GM12878 (cell line): ENCODE measurements at regions of chr16 and their contacts with region 1.

Region 1: DNA sequence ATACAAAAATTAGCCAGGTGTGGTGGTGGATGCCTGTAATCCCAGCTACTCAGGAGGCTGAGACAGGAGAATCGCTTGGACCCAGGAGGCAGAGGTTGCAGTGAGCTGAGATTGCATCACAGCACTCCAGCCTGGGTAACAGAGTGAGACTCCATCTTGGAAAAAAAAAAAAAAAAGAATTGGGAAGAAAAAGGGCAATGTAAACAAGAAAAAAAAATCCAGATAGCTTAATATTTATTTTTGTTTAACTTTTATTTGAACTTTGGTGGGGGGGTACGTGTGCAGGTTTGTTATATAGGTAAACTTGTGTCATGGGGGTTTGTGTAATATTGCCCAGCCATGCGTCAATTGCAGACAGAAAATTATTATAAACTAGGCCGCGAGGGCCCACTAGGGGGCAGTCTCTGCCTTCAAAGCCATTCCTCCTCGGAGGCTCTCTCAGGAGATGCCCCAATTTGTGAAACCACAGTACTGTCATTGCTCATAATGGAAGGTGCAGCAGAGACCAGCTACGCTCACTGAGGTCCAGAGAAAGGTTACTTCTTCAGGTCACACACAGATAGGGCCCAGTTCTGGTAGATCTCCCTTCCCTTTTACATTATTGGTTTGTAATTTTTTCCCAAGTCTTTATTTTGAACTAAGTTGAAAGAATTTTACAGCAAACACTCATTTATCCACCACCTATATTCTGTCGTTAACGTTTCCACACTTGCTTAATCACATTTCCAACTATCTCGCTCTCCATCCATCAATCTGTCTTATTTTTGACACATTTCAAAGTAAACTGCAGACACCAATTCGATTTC is 206.2 kb downstream of the PRKCB start:
- DNase-seq: peak; percentile 45
- ATAC-seq: peak; percentile 98
- H3K4me3 ChIP-seq: no peak overlapping the region
- H3K27ac ChIP-seq: no peak overlapping the region
- H3K4me1 ChIP-seq: no peaks in the 10 kb centered on the region
- H3K27me3 ChIP-seq: no peaks in the 10 kb centered on the region
- CTCF ChIP-seq: peak; percentile 64 to 80 (median 72)
- EP300 ChIP-seq: no peak
- POLR2A ChIP-seq: no peak
- RAD21 ChIP-seq: peak; percentile 77

Region 2: DNA sequence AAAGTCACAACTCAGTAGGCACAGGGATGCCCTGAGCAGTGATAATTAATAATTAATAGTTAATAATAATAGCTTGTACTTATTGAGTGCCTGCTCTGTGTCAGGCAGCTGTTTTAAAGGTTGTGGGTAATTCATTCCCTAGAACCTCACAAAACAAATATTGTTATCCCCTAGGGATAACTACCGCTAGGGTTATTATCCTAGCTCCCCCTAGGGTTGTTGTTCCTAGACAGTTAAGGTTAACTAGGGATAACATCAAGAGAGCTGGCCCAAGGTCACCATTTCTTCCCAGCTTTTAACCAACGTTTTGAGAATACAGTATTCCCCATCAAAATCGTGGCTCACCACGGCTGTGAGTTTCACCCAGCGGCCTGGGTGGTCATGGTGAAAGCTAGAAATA is 26.1 kb before region 1 on chr16:
- CTCF ChIA-PET with region 1: interaction called, 15 read pairs
- POLR2A ChIA-PET with region 1: no interaction called
- RAD21 ChIA-PET with region 1: interaction called, 10 read pairs
- SMC1A ChIA-PET with region 1: interaction called, 5 read pairs
- in situ Hi-C with region 1: no loop called
- intact Hi-C with region 1: no loop called
- DNase-seq: no peak
- ATAC-seq: no peak
- H3K4me3 ChIP-seq: no peak overlapping the region
- H3K27ac ChIP-seq: no peak overlapping the region
- H3K4me1 ChIP-seq: peaks cover 58% of the 10 kb centered on the region
- H3K27me3 ChIP-seq: no peaks in the 10 kb centered on the region
- CTCF ChIP-seq: no peak
- EP300 ChIP-seq: no peak
- POLR2A ChIP-seq: no peak
- RAD21 ChIP-seq: no peak

Region 3: DNA sequence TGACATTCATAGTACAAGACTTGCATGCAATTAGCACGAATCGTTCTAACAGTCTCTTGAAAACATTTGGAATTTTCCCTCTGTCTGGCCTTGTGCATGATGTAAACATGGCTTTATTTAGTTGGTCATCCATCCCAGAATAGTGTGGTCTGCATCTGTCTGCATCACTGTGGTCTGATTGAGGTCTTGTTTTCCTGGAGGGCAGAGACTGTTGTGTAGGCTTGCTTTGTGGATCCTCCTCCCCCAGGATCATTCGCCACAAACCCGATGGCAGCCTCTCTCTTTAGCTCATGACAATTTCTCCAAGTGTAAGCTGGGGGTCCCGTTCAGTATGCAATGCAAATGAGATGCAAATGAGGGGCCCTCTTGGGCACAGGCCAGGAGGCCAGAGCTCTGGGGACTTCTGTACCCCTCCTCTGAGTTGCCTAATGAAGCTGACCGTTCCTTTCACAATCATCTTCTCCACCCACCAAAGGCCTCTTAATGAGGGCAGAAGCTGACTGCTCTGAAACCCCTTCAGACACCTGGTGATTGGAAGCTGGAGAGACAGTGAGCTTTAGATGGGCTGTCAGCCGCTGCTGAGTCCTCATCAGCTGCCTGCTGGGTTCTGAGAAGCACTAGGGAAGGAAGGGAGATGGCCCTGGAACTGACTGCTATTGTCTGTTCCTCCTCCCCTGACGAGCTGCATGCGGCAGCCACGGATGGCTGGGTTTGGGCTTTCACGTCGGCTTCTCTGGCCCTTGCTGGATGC is 12.9 kb after region 1 on chr16:
- CTCF ChIA-PET with region 1: interaction called, 10 read pairs
- POLR2A ChIA-PET with region 1: no interaction called
- RAD21 ChIA-PET with region 1: no interaction called
- SMC1A ChIA-PET with region 1: interaction called, 3 read pairs
- in situ Hi-C with region 1: no loop called
- intact Hi-C with region 1: no loop called
- DNase-seq: no peak
- ATAC-seq: no peak
- H3K4me3 ChIP-seq: no peak overlapping the region
- H3K27ac ChIP-seq: no peak overlapping the region
- H3K4me1 ChIP-seq: no peaks in the 10 kb centered on the region
- H3K27me3 ChIP-seq: no peaks in the 10 kb centered on the region
- CTCF ChIP-seq: no peak
- EP300 ChIP-seq: no peak
- POLR2A ChIP-seq: no peak
- RAD21 ChIP-seq: no peak

Region 4: GRCh38 chr16:24776501-24777220 is 734.6 kb after region 1 on chr16:
- CTCF ChIA-PET with region 1: no interaction called
- POLR2A ChIA-PET with region 1: no interaction called
- RAD21 ChIA-PET with region 1: no interaction called
- SMC1A ChIA-PET with region 1: no interaction called
- in situ Hi-C with region 1: no loop called
- intact Hi-C with region 1: no loop called
- DNase-seq: no peak
- ATAC-seq: no peak
- H3K4me3 ChIP-seq: no peak overlapping the region
- H3K27ac ChIP-seq: no peak overlapping the region
- H3K4me1 ChIP-seq: no peaks in the 10 kb centered on the region
- H3K27me3 ChIP-seq: no peaks in the 10 kb centered on the region
- CTCF ChIP-seq: no peak
- EP300 ChIP-seq: no peak
- POLR2A ChIP-seq: no peak
- RAD21 ChIP-seq: no peak